HepG2 (cell line): ENCODE measurements at regions of chr11 and their contacts with region 1.

Region 1: DNA sequence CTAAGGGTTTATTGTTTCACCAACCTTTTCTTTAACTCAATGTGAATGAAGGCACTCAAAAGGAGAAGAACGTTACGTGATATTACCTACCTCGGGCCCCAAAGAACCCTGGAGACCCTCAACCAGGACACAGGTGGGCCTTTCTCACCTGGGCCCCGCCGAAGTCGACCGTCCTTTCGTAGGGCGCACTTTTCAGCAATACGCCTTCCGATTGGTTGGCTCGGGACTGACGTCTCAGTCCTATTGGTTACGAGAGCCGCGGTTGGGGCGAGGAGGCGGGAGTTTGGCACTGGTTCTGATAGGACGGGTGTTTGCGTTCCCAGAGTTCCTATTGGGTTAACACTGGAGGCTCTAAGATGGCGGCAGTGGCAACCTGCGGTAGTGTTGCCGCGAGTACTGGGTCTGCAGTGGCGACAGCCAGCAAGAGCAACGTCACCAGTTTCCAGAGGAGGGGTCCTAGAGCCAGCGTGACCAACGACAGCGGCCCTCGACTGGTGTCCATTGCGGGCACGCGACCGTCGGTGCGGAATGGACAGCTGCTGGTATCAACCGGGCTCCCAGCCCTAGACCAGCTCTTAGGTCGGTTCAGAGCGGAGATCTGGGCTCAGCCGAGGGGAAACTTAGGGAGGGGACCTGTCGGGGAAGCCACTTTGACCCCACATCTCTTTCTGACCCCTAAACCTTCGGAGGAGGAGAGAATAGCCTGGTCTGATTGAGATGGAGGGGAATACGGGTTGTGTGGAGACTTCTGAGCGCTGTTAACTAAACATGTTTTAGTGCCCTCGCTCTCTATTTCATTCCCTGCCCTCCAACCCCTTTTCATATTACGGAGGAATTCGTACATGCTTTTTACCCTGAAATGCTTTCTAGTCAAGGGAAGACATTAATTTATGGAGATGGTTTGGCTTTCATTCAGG is at the starts of genes ELP4 and IMMP1L:
- DNase-seq: peak; percentile 97
- ATAC-seq: peak; percentile 99
- H3K4me3 ChIP-seq: peak within 1 kb of the TSS; percentile 68 to 92 (median 86)
- H3K27ac ChIP-seq: peak within 1 kb of the TSS; percentile 89
- H3K4me1 ChIP-seq: peaks cover 42% of the 10 kb centered on the region
- H3K27me3 ChIP-seq: no peaks in the 10 kb centered on the region; a peak in 1 of 5 replicates
- CTCF ChIP-seq: no peak; the same call in 1 of the 2 replicates
- EP300 ChIP-seq: no peak
- POLR2A ChIP-seq: peak; percentile 81 to 92
- RAD21 ChIP-seq: no peak
- total RNA-seq, gene ELP4: 19.1 and 23.1 TPM in 2 replicates
- total RNA-seq, gene IMMP1L: 51.8 and 57.9 TPM in 2 replicates

Region 2: GRCh38 chr11:31810779-31811647 is 301.3 kb after region 1 on chr11 and contains the start of gene PAX6:
- CTCF ChIA-PET with region 1: no interaction called
- POLR2A ChIA-PET with region 1: no interaction called
- in situ Hi-C with region 1: no loop called
- intact Hi-C with region 1: loop called (anchors 10 kb)
- DNase-seq: peak; percentile 51
- ATAC-seq: peak; percentile 29
- H3K4me3 ChIP-seq: peak within 1 kb of the TSS; percentile 47 to 70 (median 57)
- H3K27ac ChIP-seq: no peak within 1 kb of the TSS
- H3K4me1 ChIP-seq: peaks cover 60% of the 10 kb centered on the region
- H3K27me3 ChIP-seq: peaks cover 27 to 88% of the 10 kb centered on the region in 2 experiments
- CTCF ChIP-seq: no peak
- EP300 ChIP-seq: no peak
- POLR2A ChIP-seq: no peak
- RAD21 ChIP-seq: no peak
- total RNA-seq, gene PAX6: 0.15 TPM in 1 of 2 replicates, not detected in the other